Right cardiac atrium (tissue), 5 donors: ENCODE measurements at regions of chr22 and their contacts with region 1.

Region 1: DNA sequence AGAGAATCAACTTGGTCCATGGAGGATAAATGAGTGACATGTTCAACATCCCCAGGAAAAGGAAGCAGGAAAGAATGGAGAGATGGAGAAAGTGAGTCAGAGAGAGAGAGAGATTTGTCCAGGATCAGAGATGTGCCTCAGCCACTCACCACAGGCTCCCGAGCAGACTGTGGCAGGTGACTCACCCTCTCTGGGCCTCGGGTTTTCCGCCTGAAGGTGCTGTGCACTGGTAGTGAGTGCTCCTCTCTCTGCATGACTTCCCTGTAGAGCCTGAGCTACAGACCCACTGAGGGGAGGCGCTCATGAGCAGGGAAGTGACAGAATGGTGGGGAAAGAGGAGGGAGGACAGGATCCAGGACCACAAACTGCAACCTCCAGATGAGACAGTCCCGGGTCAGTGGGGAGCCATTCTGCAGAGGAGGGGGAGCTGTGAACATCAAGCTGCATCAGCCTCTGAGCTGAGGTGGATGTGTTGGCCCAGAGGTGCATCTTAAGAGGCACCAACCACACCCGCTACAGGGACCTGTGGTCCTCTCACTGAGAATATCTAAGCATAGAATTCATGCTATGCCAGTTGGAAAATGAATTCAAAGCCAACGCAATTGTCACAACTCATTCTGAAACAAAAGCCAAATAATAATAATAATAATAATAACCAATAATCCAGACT is 433.4 kb downstream of the BRD1 start:
- DNase-seq: no peak
- ATAC-seq: no peak
- H3K4me3 ChIP-seq: no peak overlapping the region
- H3K27ac ChIP-seq: no peak overlapping the region
- H3K4me1 ChIP-seq: no peaks in the 10 kb centered on the region
- H3K27me3 ChIP-seq: no peaks in the 10 kb centered on the region

Region 2: DNA sequence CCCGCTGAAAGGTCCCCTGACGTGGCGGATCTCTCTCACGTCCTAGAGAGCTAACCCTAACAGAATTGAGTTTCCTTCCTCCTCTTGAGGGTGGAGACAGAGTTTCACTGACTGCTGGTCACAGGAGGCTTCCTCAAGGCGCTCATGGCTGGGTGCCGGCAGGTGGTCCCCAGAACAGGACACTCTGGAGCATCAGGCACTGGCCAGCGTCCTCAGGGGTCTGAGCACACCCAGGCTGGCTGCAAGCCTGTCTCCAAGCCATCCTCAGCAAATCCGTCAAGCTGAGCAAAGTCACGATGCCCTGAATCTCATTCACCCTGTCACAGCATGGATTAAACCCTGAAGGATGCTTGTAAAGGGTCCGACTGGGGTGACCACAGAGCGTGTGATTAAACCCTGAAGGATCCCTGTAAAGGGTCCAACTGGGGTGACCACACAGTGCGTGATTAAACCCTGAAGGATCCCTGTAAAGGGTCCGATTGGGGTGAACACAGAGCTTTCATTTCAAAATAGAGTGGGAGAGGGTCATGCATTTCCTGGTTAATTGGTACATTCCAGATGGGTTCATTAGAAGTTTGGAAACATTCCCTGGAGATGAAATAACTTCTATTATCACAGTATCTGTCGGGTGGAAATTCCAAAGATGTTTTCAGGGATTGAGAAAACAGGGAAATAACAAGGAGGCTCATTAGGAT is 39.6 kb before region 1 on chr22:
- intact Hi-C with region 1: no loop called
- DNase-seq: no peak
- ATAC-seq: no peak
- H3K4me3 ChIP-seq: no peak overlapping the region
- H3K27ac ChIP-seq: no peak overlapping the region
- H3K4me1 ChIP-seq: no peaks in the 10 kb centered on the region
- H3K27me3 ChIP-seq: no peaks in the 10 kb centered on the region

Region 3: DNA sequence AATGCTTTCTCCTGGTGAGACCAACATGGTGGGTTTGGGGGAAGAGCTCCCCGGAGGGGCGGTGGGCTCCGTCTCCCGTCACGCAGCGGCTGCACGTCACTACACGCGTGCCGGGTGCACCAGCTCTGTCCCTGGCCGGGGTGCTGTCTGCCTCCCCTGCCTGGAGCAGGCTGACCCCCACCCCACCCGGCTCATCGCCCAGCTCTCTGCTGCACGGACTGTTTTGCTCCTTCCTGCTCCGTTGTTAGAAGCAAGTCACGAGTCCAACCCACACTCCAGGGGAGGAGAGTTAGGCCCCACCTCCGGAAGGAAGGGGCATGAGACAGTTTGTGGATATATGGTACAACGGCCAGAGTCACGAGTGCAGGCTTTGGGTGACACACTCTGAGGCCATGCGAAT is 68.5 kb after region 1 on chr22:
- intact Hi-C with region 1: loop called in 1 of 4 experiments (anchors 10 kb)
- DNase-seq: no peak
- ATAC-seq: no peak
- H3K4me3 ChIP-seq: no peak overlapping the region
- H3K27ac ChIP-seq: no peak overlapping the region
- H3K4me1 ChIP-seq: no peaks in the 10 kb centered on the region
- H3K27me3 ChIP-seq: no peaks in the 10 kb centered on the region